MCF 10A (cell line): ENCODE measurements at regions of chr20 and their contacts with region 1.

Region 1: GRCh38 chr20:21615617-21616080 is 89.8 kb upstream of the PAX1 start:
- DNase-seq: peak; percentile 61
- H3K4me3 Mint-ChIP-seq: no peak overlapping the region
- H3K27ac Mint-ChIP-seq: no peak overlapping the region
- H3K4me1 Mint-ChIP-seq: no peaks in the 10 kb centered on the region
- H3K27me3 Mint-ChIP-seq: peaks cover 25% of the 10 kb centered on the region
- CTCF ChIP-seq: peak; percentile 83

Region 2: GRCh38 chr20:20837574-20838021 is 778.1 kb before region 1 on chr20:
- CTCF ChIA-PET with region 1: interaction called, 101 read pairs
- POLR2A ChIA-PET with region 1: interaction called, 4 read pairs
- intact Hi-C with region 1: loop called (anchors 2 kb)
- DNase-seq: peak; percentile 50
- H3K4me3 Mint-ChIP-seq: no peak overlapping the region
- H3K27ac Mint-ChIP-seq: no peak overlapping the region
- H3K4me1 Mint-ChIP-seq: no peaks in the 10 kb centered on the region
- H3K27me3 Mint-ChIP-seq: peaks cover 17% of the 10 kb centered on the region
- CTCF ChIP-seq: peak; percentile 79

Region 3: DNA sequence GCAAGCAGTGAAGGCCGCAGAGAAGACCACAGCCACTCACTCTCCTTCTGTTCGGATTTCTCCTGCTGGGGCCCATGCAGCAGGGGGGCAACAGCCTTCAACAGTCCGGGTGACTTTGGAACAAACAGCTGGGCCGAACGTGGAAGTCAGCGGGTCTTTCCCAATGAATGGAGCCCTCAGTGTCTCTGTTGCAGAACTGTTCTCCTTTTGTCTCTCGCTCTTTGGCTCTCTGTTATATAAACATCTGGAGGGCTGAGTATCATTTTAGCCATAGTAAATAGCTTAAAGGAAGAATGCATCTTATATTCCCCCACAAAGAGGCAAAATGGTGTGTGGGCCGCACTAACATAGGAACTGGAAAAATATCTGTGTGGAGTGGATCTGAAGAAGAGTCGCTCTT is 766.5 kb before region 1 on chr20:
- CTCF ChIA-PET with region 1: interaction called, 22 read pairs
- POLR2A ChIA-PET with region 1: no interaction called
- intact Hi-C with region 1: no loop called
- DNase-seq: no peak
- H3K4me3 Mint-ChIP-seq: no peak overlapping the region
- H3K27ac Mint-ChIP-seq: no peak overlapping the region
- H3K4me1 Mint-ChIP-seq: no peaks in the 10 kb centered on the region
- H3K27me3 Mint-ChIP-seq: no peaks in the 10 kb centered on the region
- CTCF ChIP-seq: no peak

Region 4: GRCh38 chr20:21571841-21572690 is 43.6 kb before region 1 on chr20:
- CTCF ChIA-PET with region 1: interaction called, 45 read pairs
- POLR2A ChIA-PET with region 1: no interaction called
- intact Hi-C with region 1: no loop called
- DNase-seq: peak; percentile 28
- H3K4me3 Mint-ChIP-seq: no peak overlapping the region
- H3K27ac Mint-ChIP-seq: no peak overlapping the region
- H3K4me1 Mint-ChIP-seq: no peaks in the 10 kb centered on the region
- H3K27me3 Mint-ChIP-seq: peaks cover 34% of the 10 kb centered on the region
- CTCF ChIP-seq: peak; percentile 90

Region 5: GRCh38 chr20:21583486-21584168 is 32.0 kb before region 1 on chr20:
- CTCF ChIA-PET with region 1: interaction called, 45 read pairs
- POLR2A ChIA-PET with region 1: no interaction called
- intact Hi-C with region 1: no loop called
- DNase-seq: no peak
- H3K4me3 Mint-ChIP-seq: no peak overlapping the region
- H3K27ac Mint-ChIP-seq: no peak overlapping the region
- H3K4me1 Mint-ChIP-seq: no peaks in the 10 kb centered on the region
- H3K27me3 Mint-ChIP-seq: peaks cover 40% of the 10 kb centered on the region
- CTCF ChIP-seq: no peak

Region 6: GRCh38 chr20:21628800-21629199 is 13.2 kb after region 1 on chr20:
- CTCF ChIA-PET with region 1: interaction called, 45 read pairs
- POLR2A ChIA-PET with region 1: no interaction called
- intact Hi-C with region 1: no loop called
- DNase-seq: no peak
- H3K4me3 Mint-ChIP-seq: no peak overlapping the region
- H3K27ac Mint-ChIP-seq: no peak overlapping the region
- H3K4me1 Mint-ChIP-seq: no peaks in the 10 kb centered on the region
- H3K27me3 Mint-ChIP-seq: peaks cover 84% of the 10 kb centered on the region
- CTCF ChIP-seq: no peak

Region 7: DNA sequence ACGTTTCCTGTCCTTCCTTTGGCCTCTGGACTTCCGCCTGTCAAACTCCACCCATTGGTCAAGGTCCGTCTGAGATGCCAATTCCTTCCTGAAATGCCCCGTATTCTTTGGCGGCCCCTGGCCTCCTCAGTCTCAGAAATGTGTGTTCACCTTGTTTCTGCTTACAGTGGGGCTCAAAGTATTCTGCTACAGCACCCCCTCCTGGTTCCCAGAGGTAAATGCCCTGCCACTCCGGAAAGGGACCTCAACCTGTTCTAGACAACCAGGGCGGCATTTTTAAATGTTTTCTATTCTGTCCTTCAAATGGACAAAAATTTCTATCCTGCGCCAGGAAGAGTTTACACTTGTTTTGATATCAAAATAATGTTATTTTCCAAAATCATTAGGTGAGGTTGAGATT is 77.7 kb after region 1 on chr20:
- CTCF ChIA-PET with region 1: no interaction called
- POLR2A ChIA-PET with region 1: no interaction called
- intact Hi-C with region 1: no loop called
- DNase-seq: peak; percentile 9
- H3K4me3 Mint-ChIP-seq: no peak overlapping the region
- H3K27ac Mint-ChIP-seq: no peak overlapping the region
- H3K4me1 Mint-ChIP-seq: peaks cover 7% of the 10 kb centered on the region
- H3K27me3 Mint-ChIP-seq: peaks cover 42% of the 10 kb centered on the region
- CTCF ChIP-seq: peak; percentile 10